ENCODE measurements at regions of chr6 and their contacts with region 1.

Region 1: DNA sequence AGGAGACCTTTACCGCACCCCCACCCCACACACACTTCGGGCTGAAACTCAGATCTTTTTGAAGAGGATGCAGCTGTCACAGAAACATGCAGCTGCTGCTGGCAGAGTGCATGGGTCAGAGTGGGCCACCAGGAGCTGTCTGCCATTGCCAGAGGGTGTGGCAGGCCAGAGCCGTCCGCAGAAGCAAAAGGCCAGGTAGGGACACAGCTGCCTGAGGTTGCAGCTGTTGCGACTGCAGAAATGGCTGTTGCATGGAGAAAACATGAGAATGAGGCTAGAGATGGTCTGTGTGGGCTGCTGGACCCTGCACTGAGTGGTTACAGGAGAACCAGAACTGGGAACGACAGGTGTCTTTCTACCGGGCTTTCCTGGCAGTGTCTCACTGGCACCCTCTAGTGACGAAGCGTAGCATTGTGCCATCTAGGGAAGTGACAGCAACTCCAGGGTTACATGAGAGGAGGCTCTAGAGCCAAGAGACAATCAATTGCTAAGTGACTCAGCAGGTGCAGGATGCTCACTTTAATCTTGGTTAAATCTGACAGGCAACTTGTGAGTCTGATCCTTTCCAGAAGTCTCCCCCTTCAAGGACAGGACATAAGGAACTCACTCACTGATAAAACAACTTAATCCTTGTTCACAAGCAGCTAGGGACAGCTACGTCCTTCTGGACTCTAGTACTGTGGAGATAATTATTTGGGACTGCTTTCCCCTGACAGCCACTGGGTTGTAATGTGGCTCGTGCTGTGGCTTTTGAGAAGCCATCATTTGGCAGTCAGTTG is 29.1 kb upstream of the SERPINB9 start:
- DNase-seq: peak; percentile 79 to 89
- ATAC-seq: peak; percentile 98 to 99 (median 98)
- H3K4me3 ChIP-seq: peak overlapping the region; percentile 47
- H3K27ac ChIP-seq: peak overlapping the region; percentile 78
- H3K4me1 ChIP-seq: peaks cover 11% of the 10 kb centered on the region
- H3K27me3 ChIP-seq: no peaks in the 10 kb centered on the region
- CTCF ChIP-seq: peak; percentile 97

Region 2: GRCh38 chr6:2791124-2791974 is 140.8 kb before region 1 on chr6:
- intact Hi-C with region 1: loop called (anchors 5 to 10 kb)
- DNase-seq: peak; percentile 47 to 73
- ATAC-seq: peak; percentile 68 to 91 (median 86)
- H3K4me3 ChIP-seq: peak overlapping the region; percentile 55
- H3K27ac ChIP-seq: peak overlapping the region; percentile 92
- H3K4me1 ChIP-seq: peaks cover 28% of the 10 kb centered on the region
- H3K27me3 ChIP-seq: no peaks in the 10 kb centered on the region
- CTCF ChIP-seq: peak; percentile 78

Region 3: GRCh38 chr6:2848851-2849250 is 83.3 kb before region 1 on chr6:
- intact Hi-C with region 1: loop called (anchors 1 to 2 kb)
- DNase-seq: no peak
- ATAC-seq: no peak
- H3K4me3 ChIP-seq: no peak overlapping the region
- H3K27ac ChIP-seq: no peak overlapping the region
- H3K4me1 ChIP-seq: peaks cover 10% of the 10 kb centered on the region
- H3K27me3 ChIP-seq: no peaks in the 10 kb centered on the region
- CTCF ChIP-seq: no peak

Measured in psoas muscle (tissue), 8 donors.